Heart right ventricle (tissue), 16 donors: ENCODE measurements at regions of chr19 and their contacts with region 1.

Region 1: DNA sequence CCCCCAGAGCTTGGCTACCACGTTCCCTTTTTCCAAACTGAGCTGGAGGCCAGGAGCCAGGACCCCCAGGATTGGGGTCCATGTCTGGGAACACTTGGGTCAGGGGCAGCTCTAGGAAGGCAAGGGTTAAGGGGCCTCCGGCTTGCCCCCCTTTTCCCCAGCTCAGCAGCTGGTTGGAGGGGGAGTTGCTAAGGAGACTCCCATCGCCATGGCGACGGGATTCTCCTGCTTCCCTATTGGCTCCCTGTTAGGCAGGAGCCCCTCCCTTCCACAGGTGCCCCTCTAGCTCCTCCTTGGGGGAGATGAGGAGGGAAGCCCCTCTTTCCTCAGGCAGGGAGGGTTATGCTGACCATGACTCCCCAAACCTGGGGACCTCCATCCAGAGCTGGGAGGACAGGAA is 33.9 kb downstream of the PDE4A start:
- DNase-seq: no peak
- ATAC-seq: no peak
- H3K4me3 ChIP-seq: no peak overlapping the region
- H3K27ac ChIP-seq: no peak overlapping the region
- H3K4me1 ChIP-seq: no peaks in the 10 kb centered on the region
- H3K27me3 ChIP-seq: no peaks in the 10 kb centered on the region
- CTCF ChIP-seq: no peak

Region 2: DNA sequence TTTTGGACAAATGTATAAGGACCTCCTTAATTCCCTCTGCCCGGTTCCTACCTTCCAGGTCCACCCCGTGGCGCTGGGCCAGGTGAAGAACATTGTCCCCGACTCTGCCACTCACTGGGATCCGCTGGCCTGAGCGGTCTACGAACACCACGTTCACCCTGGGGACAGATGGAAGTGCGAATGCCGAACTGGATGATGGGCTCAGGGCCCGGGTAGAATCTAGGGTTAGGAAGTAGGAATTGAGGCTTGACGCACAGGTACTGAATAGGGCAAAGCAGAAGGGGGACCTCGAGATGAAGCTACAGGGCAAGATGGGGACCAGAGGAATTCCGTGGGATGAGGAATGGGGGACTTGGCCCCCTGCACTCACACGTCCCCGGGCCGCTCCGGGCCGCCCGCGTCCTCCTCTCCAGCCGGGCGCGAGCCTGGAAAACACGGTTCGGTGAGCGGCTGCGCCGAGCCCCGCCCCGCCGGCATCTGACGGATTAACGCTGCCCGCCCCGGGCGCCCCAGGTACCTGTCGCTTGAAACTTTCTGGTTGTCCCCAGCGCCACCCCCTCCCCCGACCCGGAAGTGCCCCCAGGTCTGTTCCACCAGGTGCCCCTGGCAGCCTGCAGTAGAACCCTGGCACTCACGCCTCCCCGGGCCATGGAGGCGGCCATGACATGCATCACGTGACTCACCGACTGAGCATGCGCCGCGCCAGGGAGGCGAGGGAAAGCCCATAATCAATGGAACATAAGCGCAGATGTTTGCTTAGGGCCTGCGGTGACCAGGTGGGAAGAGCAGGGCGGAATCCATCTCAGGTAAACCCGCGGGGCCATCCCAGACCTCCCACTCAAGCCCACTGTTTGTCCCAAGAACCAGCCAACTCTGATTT is 138.7 kb before region 1 on chr19 and contains the start of gene FDX2:
- intact Hi-C with region 1: no loop called
- DNase-seq: peak; percentile 88 to 92
- ATAC-seq: peak; percentile 88 to 97 (median 94)
- H3K4me3 ChIP-seq: peak within 1 kb of the TSS; percentile 61 to 98 (median 90)
- H3K27ac ChIP-seq: peak within 1 kb of the TSS in 9 of 10 donors; percentile 30 to 81 (median 66)
- H3K4me1 ChIP-seq: peaks cover 4 to 22% (median 17%) of the 10 kb centered on the region in 9 donors
- H3K27me3 ChIP-seq: no peaks in the 10 kb centered on the region
- CTCF ChIP-seq: no peak
- total RNA-seq, gene FDX2: 11.7 to 21.8 (median 17.1) TPM

Region 3: GRCh38 chr19:10431943-10432735 is 22.1 kb before region 1 on chr19:
- intact Hi-C with region 1: loop called in 1 of 10 experiments (anchors 2 kb)
- DNase-seq: peak; percentile 77 to 82
- ATAC-seq: peak; percentile 56 to 81 (median 72)
- H3K4me3 ChIP-seq: peak overlapping the region; percentile 43 to 86 (median 69)
- H3K27ac ChIP-seq: peak overlapping the region in 9 of 10 donors; percentile 54 to 89 (median 71)
- H3K4me1 ChIP-seq: peaks cover 2 to 43% (median 20%) of the 10 kb centered on the region in 9 donors
- H3K27me3 ChIP-seq: no peaks in the 10 kb centered on the region
- CTCF ChIP-seq: peak in 2 of 9 donors; percentile 4 to 10

Region 4: GRCh38 chr19:10662384-10663251 is 208.4 kb after region 1 on chr19:
- intact Hi-C with region 1: no loop called
- DNase-seq: no peak
- ATAC-seq: no peak
- H3K4me3 ChIP-seq: no peak overlapping the region
- H3K27ac ChIP-seq: no peak overlapping the region
- H3K4me1 ChIP-seq: peaks cover 8 to 77% (median 60%) of the 10 kb centered on the region in 9 donors
- H3K27me3 ChIP-seq: no peaks in the 10 kb centered on the region
- CTCF ChIP-seq: no peak